ENCODE measurements at regions of chr4 and their contacts with region 1.

Region 1: DNA sequence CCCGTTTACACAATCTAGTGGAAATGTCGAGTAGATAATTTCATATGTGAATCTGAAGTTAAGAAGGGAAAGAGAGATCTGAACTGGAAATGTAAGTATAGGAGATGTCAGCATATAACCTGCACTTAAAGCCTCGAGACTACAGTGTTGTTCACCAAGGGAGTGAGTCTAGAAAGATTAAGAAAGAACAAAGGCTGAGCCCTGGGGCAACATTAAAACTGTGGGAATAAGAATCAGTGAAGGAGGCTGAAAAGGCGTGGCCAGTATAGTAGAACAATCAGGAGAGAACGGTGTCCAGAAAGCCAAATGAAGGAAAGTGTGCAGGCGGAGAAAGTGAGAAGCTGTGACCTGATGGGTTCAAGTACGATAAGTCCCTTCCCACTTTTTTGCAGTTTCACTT is 118.8 kb upstream of the TENM3 start:
- DNase-seq: no peak
- H3K4me3 ChIP-seq: no peak overlapping the region
- H3K27ac ChIP-seq: no peak overlapping the region
- H3K4me1 ChIP-seq: no peaks in the 10 kb centered on the region
- H3K27me3 ChIP-seq: no peaks in the 10 kb centered on the region
- CTCF ChIP-seq: no peak
- POLR2A ChIP-seq: no peak

Region 2: DNA sequence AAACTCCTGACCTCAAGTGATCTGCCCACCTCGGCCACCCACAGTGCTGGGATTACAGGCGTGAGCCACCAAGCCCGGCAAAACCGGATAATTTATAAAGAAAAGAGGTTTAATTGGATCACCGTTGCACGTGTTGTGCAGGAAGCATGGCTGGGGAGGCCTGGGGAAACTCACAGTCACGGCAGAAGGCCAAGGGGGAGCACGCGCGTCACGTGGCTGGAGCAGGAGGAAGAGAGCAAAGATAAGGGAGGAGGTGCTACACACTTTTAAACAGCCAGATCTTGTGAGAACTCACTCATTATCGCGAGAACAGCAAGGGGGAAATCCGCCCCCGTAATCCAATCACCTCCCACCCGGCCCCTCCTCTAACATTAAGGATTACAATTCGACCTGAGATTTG is 59.1 kb before region 1 on chr4:
- intact Hi-C with region 1: loop called (anchors 2 kb)
- DNase-seq: no peak
- H3K4me3 ChIP-seq: no peak overlapping the region
- H3K27ac ChIP-seq: no peak overlapping the region
- H3K4me1 ChIP-seq: no peaks in the 10 kb centered on the region
- H3K27me3 ChIP-seq: no peaks in the 10 kb centered on the region
- CTCF ChIP-seq: no peak
- POLR2A ChIP-seq: no peak

Region 3: GRCh38 chr4:182642831-182643230 is 518.5 kb after region 1 on chr4:
- intact Hi-C with region 1: loop called (anchors 5 kb)
- DNase-seq: no peak
- H3K4me3 ChIP-seq: no peak overlapping the region
- H3K27ac ChIP-seq: no peak overlapping the region
- H3K4me1 ChIP-seq: no peaks in the 10 kb centered on the region
- H3K27me3 ChIP-seq: no peaks in the 10 kb centered on the region
- CTCF ChIP-seq: no peak
- POLR2A ChIP-seq: no peak

Measured in breast epithelium (tissue), 4 donors.